Right ventricle myocardium inferior (tissue), 1 donor: ENCODE measurements at regions of chr17 and their contacts with region 1.

Region 1: GRCh38 chr17:67475236-67475937 is 98.3 kb downstream of the PITPNC1 start:
- DNase-seq: peak; percentile 84
- ATAC-seq: peak; percentile 68

Region 2: GRCh38 chr17:67435122-67435521 is 40.3 kb before region 1 on chr17:
- intact Hi-C with region 1: loop called (anchors 5 kb)
- DNase-seq: no peak
- ATAC-seq: peak; percentile 53

Region 3: GRCh38 chr17:67629971-67630320 is 154.6 kb after region 1 on chr17:
- intact Hi-C with region 1: loop called (anchors 10 kb)
- DNase-seq: no peak
- ATAC-seq: peak; percentile 51